A549 (cell line): ENCODE measurements at regions of chr14 and their contacts with region 1.

Region 1: GRCh38 chr14:104895786-104896661 is 28.7 kb upstream of the PLD4 start:
- DNase-seq: no peak
- ATAC-seq: peak; percentile 9 to 30; a peak in 3 of 6 replicates
- H3K4me3 ChIP-seq: no peak overlapping the region
- H3K27ac ChIP-seq: no peak overlapping the region
- H3K4me1 ChIP-seq: peaks cover 15% of the 10 kb centered on the region
- CTCF ChIP-seq: no peak
- EP300 ChIP-seq: no peak
- POLR2A ChIP-seq: no peak
- RAD21 ChIP-seq: no peak

Region 2: GRCh38 chr14:104580961-104581360 is 315.1 kb before region 1 on chr14:
- CTCF ChIA-PET with region 1: no interaction called
- POLR2A ChIA-PET with region 1: no interaction called
- DNase-seq: no peak
- ATAC-seq: no peak
- H3K4me3 ChIP-seq: no peak overlapping the region
- H3K27ac ChIP-seq: no peak overlapping the region
- H3K4me1 ChIP-seq: peaks cover 4% of the 10 kb centered on the region; the same call in 1 of the 3 replicates
- CTCF ChIP-seq: no peak
- EP300 ChIP-seq: no peak
- POLR2A ChIP-seq: no peak
- RAD21 ChIP-seq: no peak

Region 3: DNA sequence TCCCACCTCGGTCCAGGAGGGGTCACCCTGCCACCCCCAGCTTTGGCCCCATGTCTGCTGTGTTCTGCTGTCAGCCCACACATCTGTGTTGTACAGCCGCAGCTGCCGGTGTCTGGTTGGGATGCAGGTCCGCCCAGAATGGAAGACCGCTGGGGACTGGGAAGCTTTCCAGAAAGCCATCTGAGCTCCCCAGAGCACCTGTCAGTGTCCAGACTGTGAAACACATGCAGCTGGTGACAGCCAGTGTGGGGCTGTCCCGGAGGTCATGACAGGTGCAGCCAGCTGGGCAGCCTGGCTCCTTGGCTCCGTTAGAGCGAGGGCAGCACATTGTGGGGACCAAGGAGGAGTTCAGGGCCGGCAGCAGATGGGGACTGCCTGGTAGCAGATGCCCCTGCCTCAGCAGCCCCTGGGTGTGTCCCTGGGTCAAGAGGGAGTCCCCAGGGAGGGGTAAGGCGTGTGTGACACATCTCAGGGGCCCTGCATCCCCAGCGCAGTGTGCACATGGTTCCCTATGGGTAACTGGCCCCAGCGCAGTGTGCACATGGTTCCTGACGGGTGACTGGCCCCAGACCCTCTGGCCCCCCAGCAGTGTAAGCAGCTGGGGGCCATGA is 14.6 kb before region 1 on chr14:
- CTCF ChIA-PET with region 1: interaction called, 15 read pairs
- POLR2A ChIA-PET with region 1: interaction called, 3 read pairs
- DNase-seq: no peak
- ATAC-seq: no peak
- H3K4me3 ChIP-seq: no peak overlapping the region
- H3K27ac ChIP-seq: no peak overlapping the region
- H3K4me1 ChIP-seq: peaks cover 9% of the 10 kb centered on the region; the same call in 1 of the 3 replicates
- CTCF ChIP-seq: no peak
- EP300 ChIP-seq: no peak
- POLR2A ChIP-seq: no peak
- RAD21 ChIP-seq: no peak

Region 4: DNA sequence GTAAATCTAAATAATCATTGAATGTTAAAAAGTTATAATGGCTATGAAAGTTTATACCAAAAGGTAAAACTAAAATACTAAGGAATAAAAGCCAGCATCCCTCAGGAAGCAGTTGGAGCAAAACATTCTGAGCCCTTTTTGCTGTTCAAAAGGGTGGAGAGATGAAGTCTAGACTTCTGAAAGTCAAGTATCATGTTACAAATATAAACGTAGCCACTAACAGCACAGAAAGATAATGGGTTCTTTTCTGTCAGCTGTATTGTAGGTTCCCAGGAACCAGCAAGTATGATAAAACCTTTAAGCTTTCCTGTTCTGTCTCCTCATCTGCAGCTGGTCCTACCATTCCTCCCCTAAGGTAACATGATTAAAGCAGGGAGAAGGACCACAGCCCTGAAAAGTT is 12.3 kb after region 1 on chr14:
- CTCF ChIA-PET with region 1: interaction called, 26 read pairs
- POLR2A ChIA-PET with region 1: no interaction called
- DNase-seq: no peak
- ATAC-seq: no peak
- H3K4me3 ChIP-seq: no peak overlapping the region
- H3K27ac ChIP-seq: no peak overlapping the region
- H3K4me1 ChIP-seq: no peaks in the 10 kb centered on the region
- CTCF ChIP-seq: no peak
- EP300 ChIP-seq: no peak
- POLR2A ChIP-seq: no peak
- RAD21 ChIP-seq: no peak

Region 5: DNA sequence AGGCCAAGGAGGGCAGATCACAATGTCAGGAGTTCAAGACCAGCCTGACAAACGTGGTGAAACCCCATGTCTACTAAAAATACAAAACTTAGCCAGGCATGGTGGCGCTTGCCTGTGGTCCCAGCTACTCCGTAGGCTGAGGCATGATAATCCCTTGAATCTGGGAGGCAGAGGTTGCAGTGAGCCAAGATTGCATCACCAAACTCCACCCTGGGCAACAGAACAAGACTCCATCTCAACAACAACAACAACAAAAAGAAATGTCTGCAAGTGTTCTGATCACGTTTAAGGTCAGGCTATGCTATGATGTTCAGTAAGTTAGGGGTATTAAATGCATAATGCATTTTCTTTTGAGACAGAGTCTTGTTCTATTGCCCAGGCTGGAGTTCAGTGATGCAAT is 22.0 kb after region 1 on chr14:
- CTCF ChIA-PET with region 1: interaction called, 17 read pairs
- POLR2A ChIA-PET with region 1: no interaction called
- DNase-seq: no peak
- ATAC-seq: no peak
- H3K4me3 ChIP-seq: no peak overlapping the region
- H3K27ac ChIP-seq: no peak overlapping the region
- H3K4me1 ChIP-seq: no peaks in the 10 kb centered on the region
- CTCF ChIP-seq: no peak
- EP300 ChIP-seq: no peak
- POLR2A ChIP-seq: no peak
- RAD21 ChIP-seq: no peak

Region 6: GRCh38 chr14:105116451-105117256 is 220.6 kb after region 1 on chr14:
- CTCF ChIA-PET with region 1: no interaction called
- POLR2A ChIA-PET with region 1: no interaction called
- DNase-seq: no peak
- ATAC-seq: no peak
- H3K4me3 ChIP-seq: no peak overlapping the region
- H3K27ac ChIP-seq: no peak overlapping the region
- H3K4me1 ChIP-seq: no peaks in the 10 kb centered on the region
- CTCF ChIP-seq: no peak
- EP300 ChIP-seq: no peak
- POLR2A ChIP-seq: no peak
- RAD21 ChIP-seq: no peak